ENCODE measurements at regions of chr3 and their contacts with region 1.

Region 1: DNA sequence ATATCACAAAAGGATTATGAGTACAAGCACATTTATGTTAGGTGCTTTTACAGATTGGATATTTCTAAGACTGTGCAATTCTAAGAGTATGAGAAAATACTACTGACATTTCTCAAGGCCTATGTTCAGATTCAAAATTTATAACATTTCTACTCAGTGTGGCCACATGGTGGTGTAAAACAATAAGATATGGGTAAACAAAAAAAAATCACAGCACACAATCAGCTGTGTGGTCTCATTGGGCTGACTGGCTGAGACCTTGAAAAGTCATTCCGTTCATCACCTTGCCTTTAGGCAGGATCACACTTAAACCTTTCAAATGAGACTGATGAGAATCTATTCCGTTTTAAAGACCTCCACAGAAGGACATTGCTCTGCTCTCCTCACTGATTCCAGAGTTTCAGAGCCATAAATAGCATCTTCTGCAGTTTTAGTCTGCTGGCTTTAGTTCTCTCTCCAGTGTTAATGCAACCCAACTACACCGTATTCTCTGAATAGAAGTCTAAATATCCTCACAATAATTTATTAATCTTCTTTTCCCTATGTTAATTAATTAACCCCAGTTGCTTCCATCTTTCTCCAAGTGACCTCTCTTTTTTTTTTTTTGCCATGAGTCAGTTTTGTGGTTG is 158.2 kb downstream of the SPATA16 start:
- DNase-seq: peak; percentile 54
- H3K4me3 ChIP-seq: no peak overlapping the region
- H3K27ac ChIP-seq: no peak overlapping the region
- H3K4me1 ChIP-seq: peaks cover 8% of the 10 kb centered on the region
- H3K27me3 ChIP-seq: no peaks in the 10 kb centered on the region
- CTCF ChIP-seq: peak; percentile 53; the same call in 1 of the 2 replicates

Region 2: GRCh38 chr3:172836390-172836997 is 146.4 kb before region 1 on chr3:
- CTCF ChIA-PET with region 1: no interaction called
- POLR2A ChIA-PET with region 1: no interaction called
- intact Hi-C with region 1: loop called (anchors 5 kb)
- DNase-seq: peak; percentile 78
- H3K4me3 ChIP-seq: no peak overlapping the region
- H3K27ac ChIP-seq: no peak overlapping the region
- H3K4me1 ChIP-seq: peaks cover 13% of the 10 kb centered on the region
- H3K27me3 ChIP-seq: no peaks in the 10 kb centered on the region
- CTCF ChIP-seq: peak; percentile 84

Region 3: DNA sequence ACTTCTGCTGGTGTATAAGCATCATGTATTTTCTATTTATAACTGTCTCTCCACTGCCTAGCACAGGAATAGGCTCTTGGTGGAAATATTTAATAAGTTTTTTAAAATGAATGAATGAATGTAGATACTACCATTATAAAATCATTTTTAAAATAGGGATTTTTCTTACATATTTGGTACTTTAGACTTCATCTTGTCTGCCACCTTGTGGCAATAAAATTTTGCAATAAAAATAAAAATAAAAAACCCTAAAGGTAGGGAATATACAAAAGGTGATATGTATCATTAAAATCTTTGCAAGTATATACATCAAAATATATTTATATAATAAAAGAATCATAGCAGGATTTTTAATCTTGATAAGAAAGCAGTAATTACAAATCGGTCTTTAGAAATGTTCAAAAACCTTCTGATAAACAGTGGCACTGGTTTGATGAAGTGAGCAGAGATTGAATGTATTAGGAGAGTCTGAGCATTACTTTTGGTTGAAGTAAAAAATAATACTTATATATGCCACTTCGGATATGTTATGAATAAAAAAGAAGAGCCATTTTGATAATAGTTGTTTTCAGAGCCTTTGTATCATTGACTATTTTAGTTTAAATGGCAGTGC is 63.0 kb after region 1 on chr3:
- CTCF ChIA-PET with region 1: no interaction called
- POLR2A ChIA-PET with region 1: no interaction called
- intact Hi-C with region 1: loop called (anchors 10 kb)
- DNase-seq: no peak
- H3K4me3 ChIP-seq: no peak overlapping the region
- H3K27ac ChIP-seq: no peak overlapping the region
- H3K4me1 ChIP-seq: peaks cover 8% of the 10 kb centered on the region
- H3K27me3 ChIP-seq: no peaks in the 10 kb centered on the region
- CTCF ChIP-seq: no peak; the same call in none of the 2 replicates

Region 4: DNA sequence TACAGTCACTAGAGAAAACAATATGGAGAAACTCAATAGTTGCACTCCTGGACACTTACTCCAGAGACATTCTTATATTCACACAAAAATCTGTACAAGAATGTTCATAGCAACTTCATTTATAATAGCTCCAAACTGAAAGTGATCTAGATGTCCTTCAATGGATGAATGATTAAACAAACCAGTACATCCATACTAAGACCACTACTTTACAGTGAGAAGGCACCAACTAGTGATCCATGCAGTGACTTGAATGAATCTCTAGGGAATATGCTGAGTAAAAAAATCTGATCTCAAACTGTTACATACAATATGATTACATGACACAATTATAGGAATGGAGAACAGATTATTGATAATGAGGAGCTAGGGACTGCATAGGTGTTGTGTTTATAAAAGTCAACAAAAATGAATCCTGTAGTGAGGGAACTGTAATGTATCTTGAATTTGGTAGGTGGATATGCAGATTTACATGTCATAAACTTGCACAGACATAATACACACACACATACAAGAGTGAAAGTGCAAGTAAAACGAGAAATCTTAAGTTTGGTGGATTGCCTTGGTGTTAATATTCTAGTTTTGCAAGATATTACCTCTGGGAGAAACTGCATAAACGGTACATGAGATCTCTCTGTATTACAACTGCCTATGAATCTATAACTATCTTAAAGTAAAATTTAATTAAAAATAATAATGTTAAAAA is 72.5 kb after region 1 on chr3:
- CTCF ChIA-PET with region 1: interaction called, 10 read pairs
- POLR2A ChIA-PET with region 1: no interaction called
- intact Hi-C with region 1: no loop called
- DNase-seq: no peak
- H3K4me3 ChIP-seq: no peak overlapping the region
- H3K27ac ChIP-seq: no peak overlapping the region
- H3K4me1 ChIP-seq: no peaks in the 10 kb centered on the region
- H3K27me3 ChIP-seq: no peaks in the 10 kb centered on the region
- CTCF ChIP-seq: no peak

Region 5: GRCh38 chr3:173275740-173276139 is 292.9 kb after region 1 on chr3:
- CTCF ChIA-PET with region 1: no interaction called
- POLR2A ChIA-PET with region 1: no interaction called
- intact Hi-C with region 1: loop called (anchors 5 kb)
- DNase-seq: peak; percentile 59
- H3K4me3 ChIP-seq: no peak overlapping the region
- H3K27ac ChIP-seq: no peak overlapping the region
- H3K4me1 ChIP-seq: no peaks in the 10 kb centered on the region
- H3K27me3 ChIP-seq: no peaks in the 10 kb centered on the region
- CTCF ChIP-seq: peak; percentile 56

Measured in A673 (cell line).